Calu3 (cell line): ENCODE measurements at regions of chr2 and their contacts with region 1.

Region 1: DNA sequence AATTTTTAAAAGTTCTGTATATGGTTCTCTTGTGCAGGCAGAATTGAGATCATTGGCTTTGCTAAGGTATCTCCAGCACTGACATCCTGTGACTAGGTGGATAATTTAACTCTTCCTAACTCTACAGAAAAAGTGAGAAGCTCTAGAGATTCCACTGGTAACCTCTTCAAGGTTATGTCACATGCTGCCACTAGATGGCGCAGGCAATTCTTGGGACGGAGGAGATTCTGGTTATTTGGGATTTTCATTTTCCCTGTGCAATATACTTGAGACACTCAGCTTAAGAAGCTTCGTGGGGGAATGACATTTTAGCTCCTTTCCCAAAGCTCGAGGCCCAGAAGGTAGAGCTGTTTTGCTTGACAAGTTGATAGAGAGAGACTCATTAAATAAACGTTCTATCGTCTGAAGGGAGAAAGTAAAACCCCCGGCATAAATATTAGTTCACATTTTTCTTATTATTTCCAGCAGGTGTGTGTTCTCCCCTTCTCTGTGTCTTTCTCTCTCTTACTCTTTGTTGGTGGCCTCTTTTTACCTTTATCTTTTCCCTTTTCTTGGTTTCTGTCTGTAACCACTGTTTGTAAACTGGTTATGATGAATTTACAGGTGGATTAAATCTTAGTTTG is 26.6 kb upstream of the LANCL1 start:
- DNase-seq: peak; percentile 57
- H3K4me3 Mint-ChIP-seq: peak overlapping the region; percentile 64
- H3K27ac Mint-ChIP-seq: peak overlapping the region; percentile 3
- H3K4me1 Mint-ChIP-seq: peaks cover 15% of the 10 kb centered on the region
- H3K27me3 Mint-ChIP-seq: no peaks in the 10 kb centered on the region
- CTCF ChIP-seq: peak; percentile 91

Region 2: DNA sequence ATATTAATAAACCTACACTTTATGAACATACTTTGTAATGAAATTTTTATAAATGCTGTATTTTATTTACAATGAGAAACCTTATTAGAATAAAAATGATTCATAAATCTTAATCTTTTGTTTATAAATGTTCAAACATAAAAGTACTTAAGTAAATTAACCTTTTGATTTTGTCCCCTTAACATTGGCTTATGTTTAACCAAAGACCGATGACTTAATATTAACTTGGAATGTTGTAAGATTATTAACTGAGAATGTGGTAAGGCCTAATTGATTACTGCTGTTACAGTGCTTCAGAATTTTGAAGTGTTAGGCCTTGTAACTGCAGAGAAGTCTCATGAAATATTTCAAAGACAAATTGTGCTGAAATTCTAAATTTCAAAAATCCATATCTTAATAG is 59.0 kb after region 1 on chr2:
- CTCF ChIA-PET with region 1: interaction called, 3 read pairs
- intact Hi-C with region 1: loop called (anchors 1 kb)
- DNase-seq: no peak
- H3K4me3 Mint-ChIP-seq: no peak overlapping the region
- H3K27ac Mint-ChIP-seq: no peak overlapping the region
- H3K4me1 Mint-ChIP-seq: peaks cover 19% of the 10 kb centered on the region
- H3K27me3 Mint-ChIP-seq: no peaks in the 10 kb centered on the region
- CTCF ChIP-seq: no peak

Region 3: GRCh38 chr2:210577263-210578071 is 74.4 kb after region 1 on chr2:
- CTCF ChIA-PET with region 1: no interaction called
- intact Hi-C with region 1: loop called (anchors 1 kb)
- DNase-seq: no peak
- H3K4me3 Mint-ChIP-seq: no peak overlapping the region
- H3K27ac Mint-ChIP-seq: no peak overlapping the region
- H3K4me1 Mint-ChIP-seq: no peaks in the 10 kb centered on the region
- H3K27me3 Mint-ChIP-seq: no peaks in the 10 kb centered on the region
- CTCF ChIP-seq: peak; percentile 79

Region 4: DNA sequence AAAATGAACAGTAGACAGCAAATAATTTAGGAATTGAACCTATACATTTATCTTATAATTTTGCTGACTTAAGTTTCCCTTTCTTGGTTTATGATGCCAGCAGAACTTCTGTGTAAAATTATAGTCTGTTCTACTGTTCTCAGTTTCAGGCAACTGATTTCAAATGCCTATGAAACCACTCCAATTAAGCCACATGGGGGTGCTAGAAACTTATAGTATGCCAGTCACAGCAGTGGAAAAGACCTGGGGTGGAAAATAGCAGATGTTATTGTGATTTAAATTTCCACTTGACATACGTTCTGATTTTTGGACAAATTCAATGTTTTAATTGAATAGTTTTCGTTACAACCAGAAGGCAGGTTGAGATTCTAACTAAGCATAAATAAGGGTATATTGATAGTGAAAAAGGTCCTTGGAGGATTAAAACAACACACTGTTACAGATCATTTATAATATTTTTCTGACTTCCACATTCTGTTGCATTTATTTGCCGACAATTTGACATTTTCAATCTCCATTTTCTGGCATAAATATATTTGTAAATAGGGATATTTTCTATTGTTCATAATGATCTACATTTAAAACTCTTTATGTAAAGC is 114.7 kb after region 1 on chr2:
- CTCF ChIA-PET with region 1: no interaction called
- intact Hi-C with region 1: loop called (anchors 5 kb)
- DNase-seq: peak; percentile 39
- H3K4me3 Mint-ChIP-seq: no peak overlapping the region
- H3K27ac Mint-ChIP-seq: no peak overlapping the region
- H3K4me1 Mint-ChIP-seq: no peaks in the 10 kb centered on the region
- H3K27me3 Mint-ChIP-seq: no peaks in the 10 kb centered on the region
- CTCF ChIP-seq: peak; percentile 54

Region 5: GRCh38 chr2:210818473-210818872 is 315.4 kb after region 1 on chr2:
- CTCF ChIA-PET with region 1: no interaction called
- intact Hi-C with region 1: loop called (anchors 10 kb)
- DNase-seq: peak; percentile 16
- H3K4me3 Mint-ChIP-seq: no peak overlapping the region
- H3K27ac Mint-ChIP-seq: no peak overlapping the region
- H3K4me1 Mint-ChIP-seq: peaks cover 15% of the 10 kb centered on the region
- H3K27me3 Mint-ChIP-seq: no peaks in the 10 kb centered on the region
- CTCF ChIP-seq: no peak